HepG2 (cell line): ENCODE measurements at regions of chr3 and their contacts with region 1.

Region 1: GRCh38 chr3:28241221-28242160 is at the start of gene CMC1:
- DNase-seq: peak; percentile 95
- ATAC-seq: peak; percentile 98
- H3K4me3 ChIP-seq: peak within 1 kb of the TSS; percentile 70 to 86 (median 84)
- H3K27ac ChIP-seq: peak within 1 kb of the TSS; percentile 82
- H3K4me1 ChIP-seq: peaks cover 61% of the 10 kb centered on the region
- H3K27me3 ChIP-seq: no peaks in the 10 kb centered on the region; a peak in 1 of 5 replicates
- CTCF ChIP-seq: peak; percentile 42; the same call in 1 of the 2 replicates
- EP300 ChIP-seq: peak in 1 of 2 experiments; percentile 54; a peak in 2 of 4 replicates
- POLR2A ChIP-seq: peak; percentile 95 to 97
- RAD21 ChIP-seq: 0 out of 2 replicates have a peak, but pooled peaks have one; percentile 16
- total RNA-seq, gene CMC1: 29.5 and 32.3 TPM in 2 replicates

Region 2: DNA sequence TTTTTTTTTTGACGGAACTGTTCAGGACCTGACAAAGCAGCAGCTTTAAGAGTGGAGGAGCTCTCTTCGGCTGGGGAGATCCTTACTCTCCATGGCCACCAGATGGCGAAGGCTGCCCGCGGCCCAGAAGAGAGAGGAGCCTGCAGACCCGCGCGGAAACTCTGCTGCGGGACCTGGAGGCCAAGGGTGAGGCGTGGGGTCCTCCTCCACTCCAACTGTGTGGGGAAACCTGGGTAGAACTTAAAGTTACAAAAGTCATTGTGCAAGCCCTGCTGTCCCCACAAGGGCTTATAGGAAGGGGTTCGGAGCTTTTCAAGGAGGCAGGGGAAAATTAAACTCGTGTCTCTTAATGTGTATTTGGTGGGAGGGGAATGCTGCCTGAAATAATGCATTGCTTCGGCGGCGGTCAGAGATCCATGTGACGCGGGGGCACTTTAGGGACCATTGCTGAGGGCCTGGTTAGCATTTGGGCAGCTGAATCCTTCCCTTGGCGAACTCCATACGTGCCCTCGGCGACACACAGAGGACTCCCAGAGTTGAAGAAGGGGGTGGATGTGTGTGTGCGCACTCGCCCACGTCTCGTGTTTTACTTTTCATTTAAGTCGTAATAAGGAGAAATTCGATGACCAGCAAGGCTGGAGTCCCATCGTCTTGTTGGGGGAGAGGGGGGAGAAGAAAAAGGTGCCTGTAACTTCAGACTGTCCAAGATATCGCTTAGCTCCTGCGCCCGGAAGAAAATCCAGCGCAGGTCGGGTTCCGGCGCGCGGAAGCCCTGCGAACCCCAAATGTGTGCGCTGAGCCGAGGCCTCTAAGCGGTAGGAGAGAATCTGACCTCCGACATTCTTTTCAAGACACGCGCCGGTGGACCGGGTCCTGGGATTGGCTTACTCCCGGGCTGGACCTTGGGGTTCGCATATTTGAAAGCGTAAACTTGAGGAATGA is 529.1 kb before region 1 on chr3:
- CTCF ChIA-PET with region 1: no interaction called
- POLR2A ChIA-PET with region 1: interaction called, 4 read pairs
- in situ Hi-C with region 1: no loop called
- intact Hi-C with region 1: loop called (anchors 5 kb)
- DNase-seq: peak; percentile 55
- ATAC-seq: peak; percentile 94
- H3K4me3 ChIP-seq: peak overlapping the region; percentile 42 to 71 (median 58); a peak in 5 of 6 replicates
- H3K27ac ChIP-seq: no peak overlapping the region
- H3K4me1 ChIP-seq: peaks cover 34% of the 10 kb centered on the region
- H3K27me3 ChIP-seq: peaks cover 12 to 51% of the 10 kb centered on the region in 2 experiments
- CTCF ChIP-seq: peak; percentile 86
- EP300 ChIP-seq: no peak
- POLR2A ChIP-seq: no peak
- RAD21 ChIP-seq: peak; percentile 59; the same call in 1 of the 2 replicates

Region 3: DNA sequence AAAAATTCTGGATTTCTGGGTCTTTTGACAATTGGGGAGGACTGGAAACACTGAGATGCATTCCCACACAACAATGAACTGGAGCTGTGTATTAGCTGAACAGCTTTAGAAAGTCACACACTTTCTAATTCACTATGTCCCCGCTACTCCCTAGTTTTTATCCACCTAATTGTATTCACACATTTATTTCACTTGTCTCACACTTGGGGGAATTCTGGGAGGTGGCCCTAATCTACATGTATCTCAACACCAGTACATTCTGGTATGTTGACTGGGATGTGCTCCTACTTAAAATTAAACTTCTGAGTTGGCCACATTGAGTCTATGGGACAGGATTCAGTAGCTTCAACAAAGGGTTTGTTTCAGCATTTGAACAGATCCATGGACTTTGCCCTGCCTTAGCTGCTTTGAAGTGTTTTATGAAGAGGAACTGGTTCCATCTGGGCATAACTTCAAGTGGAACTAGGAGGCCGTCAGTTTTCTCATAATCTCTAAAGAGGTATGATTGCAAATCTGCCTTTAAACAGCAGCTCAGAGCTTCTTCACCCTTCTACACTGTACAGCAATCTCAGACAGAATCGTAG is 106.6 kb before region 1 on chr3:
- CTCF ChIA-PET with region 1: no interaction called
- POLR2A ChIA-PET with region 1: interaction called, 5 read pairs
- in situ Hi-C with region 1: no loop called
- intact Hi-C with region 1: loop called (anchors 1 kb)
- DNase-seq: peak; percentile 83
- ATAC-seq: peak; percentile 92
- H3K4me3 ChIP-seq: peak overlapping the region in 1 of 3 experiments; percentile 9; a peak in 1 of 6 replicates
- H3K27ac ChIP-seq: peak overlapping the region; percentile 10
- H3K4me1 ChIP-seq: peaks cover 56% of the 10 kb centered on the region
- H3K27me3 ChIP-seq: no peaks in the 10 kb centered on the region
- CTCF ChIP-seq: no peak
- EP300 ChIP-seq: peak in 1 of 2 experiments; percentile 63; a peak in 2 of 4 replicates
- POLR2A ChIP-seq: no peak
- RAD21 ChIP-seq: no peak

Region 4: DNA sequence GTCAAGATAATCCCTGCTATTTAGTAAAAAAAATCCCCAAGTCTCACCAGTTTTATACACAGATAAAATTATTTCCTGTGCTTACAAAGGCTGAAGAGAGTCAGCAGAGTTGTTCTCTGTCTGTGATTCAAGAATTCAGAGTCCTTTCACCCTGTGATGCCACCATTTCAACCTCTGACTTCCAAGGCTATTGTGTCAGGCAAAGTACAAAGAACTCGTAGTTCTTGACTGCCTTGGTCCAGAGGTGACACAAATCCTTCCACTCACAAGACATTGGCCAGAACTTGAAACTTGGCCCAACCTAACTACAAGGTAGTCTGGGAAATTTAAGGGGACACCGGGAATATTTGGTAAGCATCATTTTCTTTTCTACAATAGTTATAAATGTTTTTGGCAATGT is 35.0 kb before region 1 on chr3:
- CTCF ChIA-PET with region 1: no interaction called
- POLR2A ChIA-PET with region 1: no interaction called
- in situ Hi-C with region 1: no loop called
- intact Hi-C with region 1: loop called (anchors 1 kb)
- DNase-seq: no peak
- ATAC-seq: no peak
- H3K4me3 ChIP-seq: no peak overlapping the region
- H3K27ac ChIP-seq: no peak overlapping the region
- H3K4me1 ChIP-seq: peaks cover 12% of the 10 kb centered on the region; the same call in 1 of the 2 replicates
- H3K27me3 ChIP-seq: no peaks in the 10 kb centered on the region
- CTCF ChIP-seq: no peak
- EP300 ChIP-seq: no peak
- POLR2A ChIP-seq: no peak
- RAD21 ChIP-seq: no peak

Region 5: DNA sequence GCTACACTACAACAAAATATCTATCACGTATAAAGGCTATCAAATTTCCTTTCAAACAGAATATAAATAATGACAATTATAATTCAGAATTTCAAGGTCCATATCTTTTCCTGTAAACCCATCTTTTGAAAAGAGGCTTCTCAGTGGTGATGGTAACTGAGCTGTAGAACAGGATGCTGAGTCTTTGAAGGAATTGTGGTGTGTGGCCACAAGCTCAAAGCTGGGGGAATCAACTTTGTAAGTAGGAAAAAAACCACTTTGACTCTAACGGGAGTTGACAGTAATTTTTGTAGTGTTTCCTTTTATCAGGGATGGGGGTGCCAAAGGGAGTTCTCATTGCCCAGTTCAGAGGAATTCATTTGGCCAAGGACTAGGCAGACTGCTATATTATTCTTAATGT is 93.8 kb after region 1 on chr3:
- CTCF ChIA-PET with region 1: no interaction called
- POLR2A ChIA-PET with region 1: no interaction called
- in situ Hi-C with region 1: no loop called
- intact Hi-C with region 1: no loop called
- DNase-seq: no peak
- ATAC-seq: no peak
- H3K4me3 ChIP-seq: no peak overlapping the region
- H3K27ac ChIP-seq: no peak overlapping the region
- H3K4me1 ChIP-seq: no peaks in the 10 kb centered on the region
- H3K27me3 ChIP-seq: no peaks in the 10 kb centered on the region
- CTCF ChIP-seq: no peak
- EP300 ChIP-seq: no peak
- POLR2A ChIP-seq: no peak
- RAD21 ChIP-seq: no peak

Region 6: DNA sequence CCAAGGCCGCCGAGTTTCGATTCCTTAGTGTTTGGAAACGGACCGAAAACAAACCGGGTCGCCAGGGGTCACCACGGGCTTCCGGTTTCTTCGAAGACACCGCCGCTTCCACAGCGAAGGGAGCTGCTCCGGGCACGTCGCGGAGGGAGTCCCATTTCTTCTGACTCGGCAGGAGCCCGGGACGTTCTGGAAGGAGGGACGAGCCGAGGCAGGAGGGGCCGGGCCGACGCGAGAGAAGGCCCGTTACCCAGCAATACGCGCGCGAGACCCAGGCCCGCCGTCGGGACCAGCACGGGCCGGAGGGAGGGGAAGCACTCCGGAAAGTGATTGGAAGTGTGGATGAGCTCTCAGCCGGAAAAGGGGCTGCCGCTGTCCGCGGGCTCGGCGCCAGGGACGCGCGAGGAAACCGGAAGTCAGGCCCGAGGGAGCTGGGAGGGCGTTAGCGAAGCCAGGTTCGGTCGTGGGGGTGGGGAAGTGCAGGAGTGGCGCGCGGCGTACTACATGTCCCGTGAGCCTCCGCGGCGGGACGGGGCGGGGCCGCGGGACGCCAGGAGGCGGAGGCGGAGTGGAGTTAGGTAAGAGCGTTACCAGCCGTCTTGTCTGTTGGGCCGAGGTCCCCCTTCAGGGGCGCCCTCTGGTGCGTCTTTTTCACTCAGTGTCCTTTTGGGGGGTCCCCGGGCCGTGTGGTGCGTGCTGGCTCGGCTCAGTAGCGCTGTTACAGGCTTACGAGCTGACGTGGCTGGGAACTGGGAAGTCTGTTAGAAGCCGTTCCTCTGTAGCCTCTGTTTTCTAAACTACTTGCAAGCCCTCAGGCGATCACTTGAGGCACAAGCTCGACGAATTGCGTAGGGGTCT is 107.4 kb after region 1 on chr3 and contains the starts of genes AZI2 and ZCWPW2:
- CTCF ChIA-PET with region 1: no interaction called
- POLR2A ChIA-PET with region 1: interaction called, 15 read pairs
- in situ Hi-C with region 1: no loop called
- intact Hi-C with region 1: loop called (anchors 5 kb)
- DNase-seq: peak; percentile 89
- ATAC-seq: peak; percentile 91
- H3K4me3 ChIP-seq: peak within 1 kb of the TSS; percentile 76 to 94 (median 93)
- H3K27ac ChIP-seq: peak within 1 kb of the TSS; percentile 96
- H3K4me1 ChIP-seq: peaks cover 36% of the 10 kb centered on the region
- H3K27me3 ChIP-seq: no peaks in the 10 kb centered on the region
- CTCF ChIP-seq: peak; percentile 61
- EP300 ChIP-seq: no peak
- POLR2A ChIP-seq: peak; percentile 73 to 75
- RAD21 ChIP-seq: no peak; the same call in 1 of the 2 replicates
- total RNA-seq, gene AZI2: 43.7 and 48.4 TPM in 2 replicates
- total RNA-seq, gene ZCWPW2: 0.46 and 0.53 TPM in 2 replicates